ENCODE measurements at regions of chr6 and their contacts with region 1.

Region 1: DNA sequence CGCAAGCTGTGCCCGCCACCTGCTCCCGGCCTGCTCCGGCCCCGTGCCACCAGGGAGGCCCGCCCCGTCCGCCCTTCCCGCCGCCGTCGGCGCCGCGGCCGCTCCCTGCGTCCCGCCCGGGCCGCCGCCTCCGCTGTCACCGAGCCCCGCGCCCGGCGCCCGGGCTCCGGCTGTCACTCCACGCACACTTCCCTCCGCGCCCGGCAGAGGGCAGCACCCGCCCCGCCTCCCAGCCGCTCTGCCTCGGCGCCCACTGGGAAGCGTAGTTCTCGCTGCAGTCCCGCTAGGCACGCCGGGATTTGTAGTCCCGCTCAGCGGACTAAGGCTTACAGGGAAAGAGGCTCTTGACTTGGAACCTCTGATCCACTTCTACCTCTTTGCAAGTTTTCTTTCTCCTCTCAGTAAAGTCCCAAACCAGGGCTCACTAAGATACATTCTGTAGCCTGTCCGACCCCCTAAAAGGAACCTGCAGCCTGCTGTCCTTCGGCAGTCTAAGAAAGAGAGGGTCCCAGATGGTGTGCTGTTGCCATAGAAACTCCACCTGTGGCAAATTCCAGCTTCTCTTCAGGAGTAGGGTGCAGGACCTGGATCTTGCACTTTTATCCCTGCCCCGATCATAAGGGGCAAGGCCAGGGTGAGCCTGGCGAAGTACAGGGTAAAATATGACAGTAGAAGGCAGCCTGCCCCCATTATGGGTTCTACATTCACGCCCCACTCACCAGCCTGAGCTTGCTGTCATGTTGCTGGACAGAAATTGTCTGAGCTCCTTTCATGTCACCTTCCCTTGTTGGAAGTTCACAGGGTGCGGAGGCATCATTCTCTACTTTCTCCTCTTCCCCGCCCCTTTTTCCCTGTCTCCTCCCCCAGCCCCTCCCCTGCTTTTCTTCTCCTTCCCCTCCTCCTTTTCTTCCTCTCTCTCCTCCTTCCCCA is at the start of gene TFEB:
- DNase-seq: peak; percentile 98
- total RNA-seq, gene TFEB: 45.6 TPM

Region 2: DNA sequence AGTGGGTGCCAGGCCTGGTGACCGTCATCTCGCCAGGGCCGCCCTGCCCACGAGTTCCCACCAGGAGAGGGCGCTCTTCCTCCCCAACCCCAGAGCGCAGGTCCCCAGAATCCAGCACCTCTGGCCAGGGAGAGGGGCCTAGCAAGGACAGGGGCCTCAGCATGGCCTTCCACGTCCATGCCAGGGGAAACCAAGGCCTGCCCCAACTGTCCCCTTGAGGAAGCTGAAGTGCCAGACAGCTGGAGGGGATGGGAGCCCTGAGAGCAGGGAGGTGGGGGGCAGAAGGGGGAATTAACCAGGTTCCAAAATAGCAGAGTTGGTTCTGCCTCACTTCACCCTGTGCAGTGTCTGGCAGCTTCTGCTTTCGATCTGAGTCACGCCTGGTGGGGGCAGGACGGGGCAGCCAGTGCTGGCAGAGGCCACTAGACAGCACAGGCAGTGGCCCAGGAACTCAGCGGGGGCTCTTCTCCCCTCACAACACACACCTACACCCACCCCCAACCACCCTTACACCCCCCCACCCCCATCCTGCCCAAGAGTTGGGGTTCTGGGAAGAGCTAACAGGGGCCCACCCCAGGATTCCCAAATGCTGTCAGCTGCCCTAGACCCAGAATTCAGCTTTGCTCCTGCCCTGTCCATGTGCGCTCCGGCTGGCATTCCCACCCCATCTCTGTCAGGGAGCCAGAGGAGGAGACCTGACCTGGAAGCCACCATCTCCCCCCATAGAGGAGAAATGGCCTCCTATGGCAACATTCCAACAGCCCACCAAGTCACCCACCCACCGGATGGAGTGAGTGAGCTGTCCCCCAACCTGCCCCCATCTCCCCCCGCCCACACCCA is 29.5 kb before region 1 on chr6:
- intact Hi-C with region 1: loop called (anchors 1 kb)
- DNase-seq: peak; percentile 93